GM23248 (cell line): ENCODE measurements at regions of chr12 and their contacts with region 1.

Region 1: GRCh38 chr12:109093022-109093918 is at the start of gene ALKBH2:
- DNase-seq: peak; percentile 96
- H3K4me3 ChIP-seq: peak within 1 kb of the TSS; percentile 82
- H3K27ac ChIP-seq: peak within 1 kb of the TSS; percentile 43
- H3K4me1 ChIP-seq: peaks cover 16% of the 10 kb centered on the region
- H3K27me3 ChIP-seq: no peaks in the 10 kb centered on the region
- total RNA-seq, gene ALKBH2: 5.8 and 14.8 TPM in 2 replicates

Region 2: DNA sequence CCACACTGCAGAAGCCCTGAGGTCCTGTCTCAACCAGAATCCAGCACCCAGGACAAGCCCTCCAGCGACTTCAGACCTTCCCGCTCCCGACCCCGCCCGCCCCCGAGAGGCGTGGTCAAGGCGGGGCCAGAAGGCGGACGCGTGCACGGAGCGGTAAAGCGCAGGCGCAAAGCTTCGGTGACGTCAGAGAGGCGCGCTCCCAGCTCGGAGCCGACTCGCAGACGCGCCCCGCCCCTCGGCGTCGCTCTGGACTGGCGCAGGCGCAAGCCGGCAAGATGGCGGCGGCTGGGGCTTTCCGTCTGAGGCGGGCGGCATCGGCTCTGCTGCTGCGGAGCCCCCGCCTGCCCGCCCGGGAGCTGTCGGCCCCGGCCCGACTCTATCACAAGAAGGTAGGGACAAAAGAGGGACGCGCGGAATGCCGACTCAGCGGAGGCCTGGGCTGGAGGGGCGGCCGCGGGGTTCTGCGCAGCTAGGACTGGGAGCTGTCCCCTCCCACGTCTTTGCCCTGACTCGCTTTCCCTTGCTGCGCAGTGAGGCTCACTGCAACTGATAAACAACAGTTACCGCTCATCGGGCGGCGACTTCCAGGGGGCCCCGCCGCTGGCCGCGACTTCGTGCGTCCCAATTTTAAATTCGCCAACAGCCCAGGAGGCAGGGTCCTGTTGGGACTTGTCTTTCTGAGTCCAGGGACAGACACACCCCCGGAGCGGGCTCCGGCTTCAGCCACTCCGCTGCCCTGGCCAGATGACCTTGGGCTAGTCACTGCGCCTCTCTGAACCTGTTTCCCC is 530.7 kb before region 1 on chr12 and contains the start of gene ISCU:
- in situ Hi-C with region 1: loop called (anchors 10 kb)
- DNase-seq: peak; percentile 98
- H3K4me3 ChIP-seq: peak within 1 kb of the TSS; percentile 98
- H3K27ac ChIP-seq: peak within 1 kb of the TSS; percentile 91
- H3K4me1 ChIP-seq: peaks cover 36% of the 10 kb centered on the region
- H3K27me3 ChIP-seq: no peaks in the 10 kb centered on the region
- total RNA-seq, gene ISCU: 145 and 159 TPM in 2 replicates

Region 3: GRCh38 chr12:109377139-109377685 is 283.9 kb after region 1 on chr12:
- in situ Hi-C with region 1: no loop called
- DNase-seq: no peak
- H3K4me3 ChIP-seq: no peak overlapping the region
- H3K27ac ChIP-seq: no peak overlapping the region
- H3K4me1 ChIP-seq: no peaks in the 10 kb centered on the region
- H3K27me3 ChIP-seq: peaks cover 14% of the 10 kb centered on the region